Astrocyte of the cerebellum (primary cell): ENCODE measurements at regions of chr2 and their contacts with region 1.

Region 1: DNA sequence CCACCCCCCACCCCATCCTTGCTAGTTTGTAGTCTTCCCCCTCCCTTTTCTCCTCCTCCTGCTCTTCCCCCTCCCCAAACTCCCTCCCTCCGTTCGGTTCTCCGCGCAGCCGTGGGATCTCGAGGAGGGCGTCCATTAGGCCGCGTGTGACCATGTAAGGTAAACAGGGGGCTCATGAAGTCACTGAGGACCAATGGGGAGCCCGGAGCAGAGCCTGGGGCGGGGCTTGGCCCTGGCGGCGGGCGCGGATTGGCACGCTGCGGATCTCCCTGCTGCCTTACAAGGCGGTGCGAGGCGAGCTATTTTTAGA is 246 bp upstream of the KLF7 start:
- DNase-seq: peak; percentile 99
- H3K4me3 ChIP-seq: peak overlapping the region; percentile 83
- CTCF ChIP-seq: no peak

Region 2: GRCh38 chr2:207202645-207203044 is 36.7 kb after region 1 on chr2:
- in situ Hi-C with region 1: no loop called
- DNase-seq: no peak
- H3K4me3 ChIP-seq: no peak overlapping the region
- CTCF ChIP-seq: no peak

Region 3: DNA sequence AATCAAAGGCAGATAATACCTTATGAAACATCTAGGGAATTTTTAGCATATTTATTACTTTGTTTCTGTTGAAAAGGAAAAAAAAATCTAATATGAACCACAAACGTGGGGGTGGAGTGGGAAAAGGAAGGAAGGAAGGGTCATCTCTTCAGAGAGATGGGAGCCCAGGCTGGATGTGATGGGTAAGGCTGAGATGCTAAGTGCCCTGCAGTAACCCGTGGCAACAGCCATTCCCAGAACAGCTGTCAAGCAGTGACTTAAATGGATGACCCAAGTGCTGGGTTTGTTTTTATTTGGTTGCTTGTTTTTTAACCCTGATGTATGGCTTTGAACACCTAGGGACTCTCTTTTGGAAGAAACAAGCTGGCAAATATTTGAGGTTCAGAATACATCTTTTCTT is 50.5 kb after region 1 on chr2:
- in situ Hi-C with region 1: no loop called
- DNase-seq: no peak
- H3K4me3 ChIP-seq: no peak overlapping the region
- CTCF ChIP-seq: no peak

Region 4: DNA sequence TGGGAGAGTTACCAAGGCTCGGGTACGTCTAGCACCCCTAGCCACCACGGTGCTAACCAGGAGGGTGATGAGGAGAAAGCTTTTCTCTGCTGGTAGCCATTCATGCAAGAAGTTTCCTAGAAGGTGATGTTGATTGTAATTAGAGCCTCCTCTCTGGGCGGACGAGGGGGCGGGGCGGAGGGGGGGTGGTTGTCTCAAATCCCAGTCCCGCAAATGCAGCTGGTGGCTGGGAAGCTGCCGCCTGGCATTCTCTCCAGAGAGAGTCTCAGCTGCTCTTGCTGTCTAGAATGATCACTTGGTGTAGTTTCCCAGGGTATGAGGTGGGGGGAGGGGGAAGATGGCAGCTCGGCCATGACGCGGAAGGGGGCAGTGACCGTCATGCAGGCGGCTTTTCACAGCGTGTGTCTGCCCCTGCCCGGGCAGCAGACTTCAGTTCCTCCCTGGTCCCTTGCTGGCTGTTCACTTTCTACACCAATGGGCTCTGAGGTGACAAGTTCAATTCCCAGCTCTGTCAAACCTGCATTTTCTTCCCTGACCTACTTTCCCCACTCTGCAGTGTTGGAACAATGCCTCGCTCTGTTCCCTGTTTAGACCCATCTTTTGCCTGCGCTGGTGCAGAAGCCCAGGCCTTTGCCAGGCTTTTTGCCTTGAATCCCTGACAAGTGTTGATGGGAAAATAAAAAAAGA is 61.2 kb after region 1 on chr2:
- in situ Hi-C with region 1: loop called (anchors 5 kb)
- DNase-seq: no peak
- H3K4me3 ChIP-seq: no peak overlapping the region
- CTCF ChIP-seq: no peak

Region 5: DNA sequence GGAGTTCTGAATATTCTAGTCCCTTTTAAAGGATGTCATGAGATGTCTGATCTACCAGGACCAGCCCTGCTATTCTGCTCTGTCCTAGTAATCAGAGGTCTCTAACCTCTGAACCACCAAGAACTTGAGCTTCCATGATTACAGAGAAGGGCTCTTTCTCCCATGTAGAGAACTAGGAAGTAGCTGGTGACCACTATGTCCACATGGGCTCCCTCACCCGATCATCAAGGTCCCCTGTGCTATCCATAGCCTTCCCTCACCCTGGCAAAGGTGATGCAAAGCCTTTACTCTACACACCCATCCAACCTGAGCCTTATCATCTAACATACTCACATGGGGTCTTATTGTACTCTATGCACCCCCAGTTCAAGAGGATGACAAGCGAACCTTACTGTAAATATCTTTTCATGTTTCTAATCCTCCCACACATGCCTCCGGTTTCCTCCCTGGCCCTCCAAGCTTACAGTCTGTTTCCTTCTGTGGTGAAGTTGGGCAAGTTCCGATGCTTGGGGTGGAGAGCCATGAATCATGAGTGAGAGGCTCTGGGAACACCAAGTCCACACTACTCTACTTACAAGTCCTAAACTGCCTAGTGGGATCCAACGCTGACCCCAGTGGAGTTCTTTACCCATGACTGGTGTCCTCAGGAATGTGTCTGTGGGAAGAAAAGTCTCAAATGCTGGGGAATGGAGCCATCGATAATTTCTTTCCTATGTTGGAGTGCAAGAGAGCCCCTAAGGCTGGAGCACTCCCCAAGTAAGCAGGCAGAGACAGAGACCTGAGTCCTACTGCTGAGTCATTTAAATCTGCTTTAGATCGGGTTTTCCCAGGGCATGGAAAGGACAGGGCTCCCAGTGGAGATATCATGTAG is 73.1 kb after region 1 on chr2:
- in situ Hi-C with region 1: no loop called
- DNase-seq: peak; percentile 100
- H3K4me3 ChIP-seq: no peak overlapping the region
- CTCF ChIP-seq: no peak